CD4-positive, alpha-beta T cell (primary cell): ENCODE measurements at regions of chr16 and their contacts with region 1.

Region 1: GRCh38 chr16:58198022-58198683 is at the start of gene CSNK2A2:
- DNase-seq: peak; percentile 48 to 88 (median 66)
- ATAC-seq: peak; percentile 94
- H3K4me3 ChIP-seq: peak within 1 kb of the TSS; percentile 65
- H3K4me3 Mint-ChIP-seq: peak within 1 kb of the TSS; percentile 90
- H3K27ac ChIP-seq: no peak within 1 kb of the TSS
- H3K27ac Mint-ChIP-seq: peak within 1 kb of the TSS; percentile 82
- H3K4me1 ChIP-seq: peaks cover 19% of the 10 kb centered on the region
- H3K4me1 Mint-ChIP-seq: peaks cover 54% of the 10 kb centered on the region
- H3K27me3 ChIP-seq: peaks cover 5% of the 10 kb centered on the region in 2 experiments
- H3K27me3 Mint-ChIP-seq: peaks cover 7% of the 10 kb centered on the region
- CTCF ChIP-seq: no peak
- total RNA-seq, gene CSNK2A2: 49.0 to 51.0 TPM

Region 2: DNA sequence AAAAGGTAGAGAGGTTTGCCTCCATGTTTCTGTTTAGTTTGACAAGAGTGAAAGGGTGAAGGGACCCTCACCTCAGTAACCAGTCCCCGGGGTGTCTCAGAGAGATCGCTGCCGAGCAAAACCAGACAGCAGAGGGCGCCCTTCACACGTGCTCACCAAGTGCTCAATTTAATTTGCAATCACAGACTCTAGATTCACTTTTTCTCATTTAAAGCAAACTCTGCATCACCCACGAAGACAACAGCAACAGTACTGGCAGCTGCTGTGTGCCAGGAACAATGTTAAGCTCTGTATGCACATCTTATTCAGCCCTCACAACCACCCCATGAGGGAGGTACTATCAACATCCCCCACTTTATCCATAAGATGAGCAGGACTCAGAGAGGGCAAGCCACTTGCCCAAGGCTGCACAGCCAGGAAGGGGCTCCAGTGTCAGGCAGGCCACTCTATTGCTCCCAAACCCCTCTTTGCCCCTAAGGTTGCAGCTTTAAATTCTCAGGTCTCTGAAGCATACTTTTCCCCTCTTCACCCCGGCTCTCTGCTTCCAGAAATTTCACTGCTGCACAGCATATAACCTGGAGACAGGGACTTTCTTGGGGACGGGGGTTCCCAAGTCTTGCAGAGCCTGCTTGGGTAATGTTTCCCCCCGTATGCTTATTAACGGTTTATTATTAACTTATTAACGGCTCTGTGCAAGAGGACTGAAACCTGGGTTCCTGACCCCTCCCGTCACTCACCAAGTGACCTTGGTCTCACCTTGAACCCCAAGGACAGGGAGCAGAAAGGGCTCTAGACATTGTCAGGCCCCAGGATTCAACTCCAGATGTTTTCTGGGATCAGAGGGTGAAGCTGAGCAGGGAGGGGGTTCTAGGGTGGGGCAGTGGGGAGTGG is 298.1 kb before region 1 on chr16:
- CTCF ChIA-PET with region 1: no interaction called
- POLR2A ChIA-PET with region 1: no interaction called
- intact Hi-C with region 1: loop called in 1 of 2 experiments (anchors 5 kb)
- DNase-seq: peak; percentile 62 to 90 (median 78)
- ATAC-seq: peak; percentile 67
- H3K4me3 ChIP-seq: no peak overlapping the region
- H3K4me3 Mint-ChIP-seq: no peak overlapping the region
- H3K27ac ChIP-seq: no peak overlapping the region
- H3K27ac Mint-ChIP-seq: no peak overlapping the region
- H3K4me1 ChIP-seq: peaks cover 4% of the 10 kb centered on the region
- H3K4me1 Mint-ChIP-seq: peaks cover 6% of the 10 kb centered on the region
- H3K27me3 ChIP-seq: peaks cover 0 to 6% of the 10 kb centered on the region in 2 experiments
- H3K27me3 Mint-ChIP-seq: peaks cover 24% of the 10 kb centered on the region
- CTCF ChIP-seq: peak; percentile 83

Region 3: GRCh38 chr16:58025351-58026138 is 172.6 kb before region 1 on chr16 and contains the start of gene MMP15:
- CTCF ChIA-PET with region 1: no interaction called
- POLR2A ChIA-PET with region 1: no interaction called
- intact Hi-C with region 1: loop called in 1 of 2 experiments (anchors 2 kb)
- DNase-seq: peak; percentile 22 to 80 (median 56)
- ATAC-seq: peak; percentile 61
- H3K4me3 ChIP-seq: peak within 1 kb of the TSS; percentile 61
- H3K4me3 Mint-ChIP-seq: peak within 1 kb of the TSS; percentile 96
- H3K27ac ChIP-seq: no peak within 1 kb of the TSS
- H3K27ac Mint-ChIP-seq: peak within 1 kb of the TSS; percentile 81
- H3K4me1 ChIP-seq: peaks cover 34% of the 10 kb centered on the region
- H3K4me1 Mint-ChIP-seq: peaks cover 18% of the 10 kb centered on the region
- H3K27me3 ChIP-seq: peaks cover 7 to 13% of the 10 kb centered on the region in 2 experiments
- H3K27me3 Mint-ChIP-seq: peaks cover 9% of the 10 kb centered on the region
- CTCF ChIP-seq: no peak
- total RNA-seq, gene MMP15: 0.25 to 0.31 TPM

Region 4: DNA sequence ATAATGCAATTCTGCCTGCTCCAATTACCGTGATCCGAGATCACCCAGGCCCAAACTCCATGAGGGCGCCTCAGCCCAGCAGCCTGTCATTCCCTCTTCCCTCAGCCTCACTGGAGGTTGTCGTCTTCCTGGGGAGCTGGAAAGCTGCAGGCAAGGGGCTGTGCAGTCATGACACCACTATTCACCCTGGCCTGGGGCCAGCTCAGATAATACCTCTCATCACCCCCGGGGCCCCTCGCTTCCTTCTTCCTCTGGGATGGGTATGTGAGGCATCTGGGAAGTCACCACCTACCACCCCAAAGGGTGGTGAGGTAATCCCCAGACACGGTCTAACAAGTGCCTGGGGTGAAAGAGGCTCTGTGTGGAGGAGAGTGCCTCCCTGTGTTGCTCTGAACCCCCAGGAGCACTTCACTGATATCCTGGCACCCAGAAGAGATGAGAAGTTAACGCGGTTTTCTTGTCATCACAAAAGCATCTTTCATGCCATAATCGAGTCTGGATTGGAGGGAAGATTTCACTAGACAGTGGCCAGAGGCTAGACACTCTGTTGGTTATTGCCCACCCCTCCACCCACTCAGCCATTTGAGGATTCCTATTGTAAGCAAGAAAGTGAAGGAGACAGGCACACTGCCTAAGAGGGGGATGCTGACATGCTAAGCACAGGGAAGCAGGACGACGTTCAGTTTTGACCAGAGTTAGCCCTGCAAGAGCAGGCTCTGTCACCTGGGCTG is 87.4 kb before region 1 on chr16:
- CTCF ChIA-PET with region 1: no interaction called
- POLR2A ChIA-PET with region 1: no interaction called
- intact Hi-C with region 1: no loop called
- DNase-seq: peak in 1 of 14 experiments; percentile 24
- ATAC-seq: no peak
- H3K4me3 ChIP-seq: no peak overlapping the region
- H3K4me3 Mint-ChIP-seq: no peak overlapping the region
- H3K27ac ChIP-seq: no peak overlapping the region
- H3K27ac Mint-ChIP-seq: no peak overlapping the region
- H3K4me1 ChIP-seq: no peaks in the 10 kb centered on the region
- H3K4me1 Mint-ChIP-seq: no peaks in the 10 kb centered on the region
- H3K27me3 ChIP-seq: no peaks in the 10 kb centered on the region
- H3K27me3 Mint-ChIP-seq: no peaks in the 10 kb centered on the region
- CTCF ChIP-seq: no peak

Region 5: GRCh38 chr16:58236231-58236690 is 38.1 kb after region 1 on chr16:
- CTCF ChIA-PET with region 1: no interaction called
- POLR2A ChIA-PET with region 1: no interaction called
- intact Hi-C with region 1: loop called in 1 of 2 experiments (anchors 2 kb)
- DNase-seq: peak; percentile 30 to 77 (median 58)
- ATAC-seq: peak; percentile 95
- H3K4me3 ChIP-seq: peak overlapping the region; percentile 60
- H3K4me3 Mint-ChIP-seq: peak overlapping the region; percentile 79
- H3K27ac ChIP-seq: no peak overlapping the region
- H3K27ac Mint-ChIP-seq: no peak overlapping the region
- H3K4me1 ChIP-seq: peaks cover 10% of the 10 kb centered on the region
- H3K4me1 Mint-ChIP-seq: peaks cover 7% of the 10 kb centered on the region
- H3K27me3 ChIP-seq: peaks cover 0 to 5% of the 10 kb centered on the region in 2 experiments
- H3K27me3 Mint-ChIP-seq: peaks cover 20% of the 10 kb centered on the region
- CTCF ChIP-seq: no peak

Region 6: GRCh38 chr16:58392215-58393137 is 194.3 kb after region 1 on chr16 and contains the start of gene GINS3:
- CTCF ChIA-PET with region 1: no interaction called
- POLR2A ChIA-PET with region 1: no interaction called
- intact Hi-C with region 1: loop called in 1 of 2 experiments (anchors 5 kb)
- DNase-seq: peak; percentile 66 to 91 (median 78)
- ATAC-seq: peak; percentile 97
- H3K4me3 ChIP-seq: peak within 1 kb of the TSS; percentile 100
- H3K4me3 Mint-ChIP-seq: peak within 1 kb of the TSS; percentile 100
- H3K27ac ChIP-seq: peak within 1 kb of the TSS; percentile 62 to 89
- H3K27ac Mint-ChIP-seq: peak within 1 kb of the TSS; percentile 92
- H3K4me1 ChIP-seq: peaks cover 12% of the 10 kb centered on the region
- H3K4me1 Mint-ChIP-seq: peaks cover 17% of the 10 kb centered on the region
- H3K27me3 ChIP-seq: no peaks in the 10 kb centered on the region
- H3K27me3 Mint-ChIP-seq: no peaks in the 10 kb centered on the region
- CTCF ChIP-seq: no peak
- total RNA-seq, gene GINS3: 0.27 to 0.36 TPM

Region 7: DNA sequence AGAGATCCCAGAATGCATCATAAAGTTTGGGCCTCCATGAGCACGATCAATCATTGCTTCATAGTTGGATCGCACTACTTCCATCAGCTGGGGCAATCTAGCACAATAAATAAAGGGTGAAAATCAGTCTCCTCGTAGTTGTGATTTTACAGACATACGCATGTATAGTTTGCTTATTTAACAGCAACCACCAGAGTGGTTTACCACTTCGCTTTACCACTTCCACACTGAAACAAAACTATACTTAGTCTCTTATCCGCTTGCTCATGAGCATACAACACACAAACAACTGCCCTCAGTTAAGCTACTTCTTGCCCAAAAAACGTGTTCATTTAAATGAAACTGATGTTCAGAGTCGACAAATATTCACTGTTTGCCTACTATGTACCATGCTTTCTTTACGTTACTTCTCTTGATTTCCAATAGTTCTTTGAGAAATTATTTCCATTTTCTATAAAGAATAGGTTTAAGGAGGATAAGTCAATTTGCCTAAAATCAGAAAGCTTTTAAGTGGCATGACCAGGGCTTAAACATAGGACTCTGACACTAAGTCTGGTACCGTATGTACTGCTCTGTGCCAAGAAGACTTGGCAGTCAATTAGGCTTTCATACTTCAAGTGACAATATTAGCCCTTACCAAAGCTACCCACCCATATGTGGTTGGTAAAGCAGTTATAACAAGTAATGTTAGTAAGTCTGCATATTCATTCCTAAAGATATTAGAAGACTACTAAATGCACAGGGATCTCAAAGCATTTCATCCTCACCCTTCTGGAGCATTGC is 339.2 kb after region 1 on chr16:
- CTCF ChIA-PET with region 1: no interaction called
- POLR2A ChIA-PET with region 1: no interaction called
- intact Hi-C with region 1: no loop called
- DNase-seq: peak in 1 of 14 experiments; percentile 2
- ATAC-seq: no peak
- H3K4me3 ChIP-seq: no peak overlapping the region
- H3K4me3 Mint-ChIP-seq: no peak overlapping the region
- H3K27ac ChIP-seq: no peak overlapping the region
- H3K27ac Mint-ChIP-seq: no peak overlapping the region
- H3K4me1 ChIP-seq: no peaks in the 10 kb centered on the region
- H3K4me1 Mint-ChIP-seq: no peaks in the 10 kb centered on the region
- H3K27me3 ChIP-seq: no peaks in the 10 kb centered on the region
- H3K27me3 Mint-ChIP-seq: no peaks in the 10 kb centered on the region
- CTCF ChIP-seq: no peak

Region 8: DNA sequence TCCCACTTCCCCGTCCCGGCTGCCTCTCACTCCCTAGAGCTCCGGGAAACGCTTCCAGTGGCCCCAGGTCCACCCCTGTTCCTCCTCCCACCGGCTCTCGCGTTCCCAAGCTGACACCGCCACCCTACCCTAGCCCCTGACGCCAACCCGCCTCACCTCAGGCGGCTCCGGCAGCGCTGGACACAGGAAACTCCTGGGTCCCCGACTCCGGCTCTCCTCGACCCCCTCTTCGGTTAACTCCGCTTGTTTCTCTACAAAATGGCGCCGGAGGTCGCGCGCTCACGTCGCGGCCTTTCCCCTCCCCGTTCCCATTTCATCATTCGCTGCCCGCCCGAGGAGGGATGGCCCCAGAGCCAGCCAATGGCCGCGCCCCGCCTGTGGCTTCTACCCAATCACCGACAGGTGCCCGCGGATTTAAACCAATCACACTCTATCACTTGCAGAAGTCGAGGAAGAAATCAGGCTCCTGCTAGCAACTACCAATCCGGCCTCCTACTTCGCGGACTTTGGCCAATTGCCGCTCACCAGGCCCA is 431.5 kb after region 1 on chr16 and contains the start of gene CNOT1:
- CTCF ChIA-PET with region 1: no interaction called
- POLR2A ChIA-PET with region 1: no interaction called
- intact Hi-C with region 1: loop called in 1 of 2 experiments (anchors 10 kb)
- DNase-seq: peak; percentile 94 to 99 (median 97)
- ATAC-seq: peak; percentile 81
- H3K4me3 ChIP-seq: peak within 1 kb of the TSS; percentile 93
- H3K4me3 Mint-ChIP-seq: peak within 1 kb of the TSS; percentile 98
- H3K27ac ChIP-seq: peak within 1 kb of the TSS; percentile 99 to 100
- H3K27ac Mint-ChIP-seq: peak within 1 kb of the TSS; percentile 96
- H3K4me1 ChIP-seq: peaks cover 37% of the 10 kb centered on the region
- H3K4me1 Mint-ChIP-seq: peaks cover 28% of the 10 kb centered on the region
- H3K27me3 ChIP-seq: no peaks in the 10 kb centered on the region
- H3K27me3 Mint-ChIP-seq: no peaks in the 10 kb centered on the region
- CTCF ChIP-seq: no peak
- total RNA-seq, gene CNOT1: 164 to 184 TPM